GM10248 (cell line): ENCODE measurements at regions of chr20 and their contacts with region 1.

Region 1: DNA sequence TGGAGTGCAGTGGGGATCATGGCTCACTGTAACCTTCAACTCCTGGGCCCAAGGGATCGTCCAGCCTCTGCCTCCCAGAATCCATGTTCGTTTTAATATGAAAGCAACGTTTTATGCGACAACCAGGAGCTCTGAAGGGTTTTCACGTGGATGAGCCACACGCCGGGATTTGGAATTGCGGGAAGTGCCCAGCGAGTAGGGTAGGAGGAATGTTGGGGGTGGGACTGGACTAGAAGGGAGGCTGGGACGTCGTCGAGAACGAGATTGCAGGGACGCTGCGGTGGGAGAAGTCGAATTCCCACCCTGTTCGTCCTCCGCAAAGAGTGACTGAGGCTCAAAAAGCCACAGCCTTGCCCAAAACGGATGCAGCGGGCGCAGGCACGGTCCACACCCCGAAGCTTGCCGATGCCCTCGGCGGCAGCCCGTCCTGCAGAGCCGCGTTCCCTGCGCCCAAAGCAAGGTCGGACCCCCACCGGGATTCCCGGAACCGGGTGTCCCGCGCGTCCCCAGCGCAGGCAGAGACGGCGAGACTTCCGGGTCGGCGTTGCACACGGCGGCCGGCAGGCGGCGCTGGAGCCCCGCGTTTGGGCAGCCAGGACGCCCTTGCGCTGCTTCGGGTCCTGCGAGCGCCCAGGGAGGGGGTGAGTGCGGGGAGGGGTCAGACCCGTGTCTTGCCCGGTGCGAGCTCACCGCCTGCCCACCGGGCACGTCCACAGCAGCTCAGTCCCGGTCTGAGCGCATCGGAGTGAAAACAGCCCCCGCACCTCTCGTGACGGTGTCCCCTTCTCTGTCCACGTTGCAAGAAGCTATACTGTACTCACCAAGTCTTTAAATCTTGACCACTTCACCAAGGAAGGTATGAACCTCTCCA is 87.8 kb downstream of the DHX35 start:
- DNase-seq: peak; percentile 88
- CTCF ChIP-seq: peak; percentile 99

Region 2: GRCh38 chr20:38645980-38646858 is 403.7 kb before region 1 on chr20:
- CTCF ChIA-PET with region 1: interaction called, 11 read pairs
- POLR2A ChIA-PET with region 1: no interaction called
- DNase-seq: peak; percentile 92
- CTCF ChIP-seq: peak; percentile 99

Region 3: DNA sequence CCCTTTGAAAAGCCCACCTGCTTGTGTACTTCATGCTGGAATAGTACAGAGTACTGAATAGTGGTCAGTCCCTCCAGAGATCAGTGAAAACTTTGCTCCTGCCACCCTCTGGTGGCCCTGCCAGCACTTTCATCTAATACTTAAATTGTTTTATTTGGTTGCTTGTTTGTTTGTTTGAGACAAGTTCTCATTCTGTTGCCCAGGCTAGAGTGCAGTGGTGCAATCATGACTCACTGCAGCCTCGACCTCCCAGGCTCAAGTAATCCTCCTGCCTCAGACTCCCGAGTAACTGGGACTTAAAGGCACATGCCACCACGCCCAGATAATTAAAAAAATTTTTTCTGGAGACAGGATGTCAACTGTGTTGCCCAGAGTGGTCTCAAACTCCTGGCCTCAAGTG is 114.6 kb before region 1 on chr20:
- CTCF ChIA-PET with region 1: interaction called, 212 read pairs
- POLR2A ChIA-PET with region 1: no interaction called
- DNase-seq: no peak
- CTCF ChIP-seq: no peak

Region 4: DNA sequence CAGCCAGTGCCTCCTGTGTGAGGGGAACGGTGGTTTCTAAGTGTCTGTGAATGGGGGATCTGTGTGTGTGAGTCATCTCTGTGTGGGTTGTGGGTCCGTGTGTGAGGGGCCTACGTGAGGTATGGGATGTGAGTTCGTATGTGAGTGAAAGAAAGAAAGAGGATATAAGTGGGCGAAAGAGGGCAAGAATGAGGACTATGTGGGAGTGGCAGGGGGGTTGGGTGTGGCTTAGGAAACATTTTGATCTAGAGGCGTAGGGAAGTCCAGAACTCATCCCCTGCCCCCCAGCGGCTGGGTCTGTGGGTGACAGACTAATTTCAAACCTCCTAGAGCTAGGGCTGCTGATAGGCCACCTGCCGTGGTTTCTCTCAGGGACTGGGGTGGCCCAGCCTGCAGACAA is 52.3 kb before region 1 on chr20:
- CTCF ChIA-PET with region 1: interaction called, 15 read pairs
- POLR2A ChIA-PET with region 1: no interaction called
- DNase-seq: peak; percentile 84
- CTCF ChIP-seq: peak; percentile 59

Region 5: GRCh38 chr20:39070484-39071231 is 20.7 kb after region 1 on chr20:
- CTCF ChIA-PET with region 1: interaction called, 102 read pairs
- POLR2A ChIA-PET with region 1: no interaction called
- DNase-seq: no peak
- CTCF ChIP-seq: no peak

Region 6: GRCh38 chr20:39089029-39089428 is 39.1 kb after region 1 on chr20:
- CTCF ChIA-PET with region 1: interaction called, 136 read pairs
- POLR2A ChIA-PET with region 1: no interaction called
- DNase-seq: no peak
- CTCF ChIP-seq: no peak

Region 7: GRCh38 chr20:39338469-39339376 is 288.8 kb after region 1 on chr20:
- CTCF ChIA-PET with region 1: no interaction called
- POLR2A ChIA-PET with region 1: no interaction called
- DNase-seq: peak; percentile 28
- CTCF ChIP-seq: no peak

Region 8: DNA sequence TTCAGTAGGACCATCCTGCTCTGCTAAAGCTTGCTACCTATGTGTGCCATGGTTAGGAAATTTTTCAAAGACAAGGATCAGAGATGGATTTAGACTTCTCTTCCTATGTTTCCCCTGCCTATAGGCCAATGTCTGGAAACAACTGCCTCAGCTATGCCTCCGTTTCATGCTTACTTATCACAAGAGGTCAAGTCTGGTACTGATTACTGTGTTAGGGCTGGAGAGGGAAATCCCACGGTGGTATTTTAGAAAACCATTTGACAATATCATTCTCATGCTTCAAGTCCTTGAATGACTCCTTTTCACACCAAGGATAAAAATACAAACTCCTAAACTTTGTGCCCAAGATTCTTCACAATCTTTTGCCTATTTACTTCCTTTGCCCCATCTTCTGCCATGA is 396.5 kb after region 1 on chr20:
- CTCF ChIA-PET with region 1: no interaction called
- POLR2A ChIA-PET with region 1: no interaction called
- DNase-seq: no peak
- CTCF ChIP-seq: no peak